ENCODE measurements at regions of chr4 and their contacts with region 1.

Region 1: DNA sequence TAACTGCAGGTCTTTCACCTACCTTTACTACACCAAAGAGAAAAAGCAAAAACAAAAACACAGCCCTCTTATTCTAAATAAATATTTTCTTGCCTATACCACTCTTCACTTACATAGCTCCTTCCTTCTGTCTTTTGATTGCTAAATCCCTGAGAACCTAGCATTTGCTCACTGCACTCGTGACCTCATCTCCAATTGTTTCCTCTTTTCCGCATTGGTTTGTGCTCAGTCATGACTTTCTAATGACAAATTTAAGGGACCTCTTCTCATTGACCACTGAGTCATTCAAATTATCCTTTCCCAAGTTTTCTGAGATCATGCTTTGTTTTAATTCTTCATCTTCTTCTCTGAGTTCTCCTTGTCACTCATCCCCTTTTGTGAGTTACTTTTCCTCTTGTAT is 1697.1 kb downstream of the STIM2 start:
- DNase-seq: no peak
- H3K4me3 ChIP-seq: no peak overlapping the region
- H3K27ac ChIP-seq: no peak overlapping the region
- H3K4me1 ChIP-seq: no peaks in the 10 kb centered on the region
- H3K27me3 ChIP-seq: no peaks in the 10 kb centered on the region
- CTCF ChIP-seq: no peak
- EP300 ChIP-seq: no peak
- POLR2A ChIP-seq: no peak

Region 2: GRCh38 chr4:30153427-30153826 is 1595.7 kb after region 1 on chr4:
- in situ Hi-C with region 1: no loop called
- intact Hi-C with region 1: loop called (anchors 5 kb)
- DNase-seq: no peak
- H3K4me3 ChIP-seq: no peak overlapping the region
- H3K27ac ChIP-seq: no peak overlapping the region
- H3K4me1 ChIP-seq: no peaks in the 10 kb centered on the region
- H3K27me3 ChIP-seq: no peaks in the 10 kb centered on the region
- CTCF ChIP-seq: no peak
- EP300 ChIP-seq: no peak
- POLR2A ChIP-seq: no peak

Measured in transverse colon (tissue), 4 donors.